HEK293 (cell line): ENCODE measurements at regions of chr2 and their contacts with region 1.

Region 1: DNA sequence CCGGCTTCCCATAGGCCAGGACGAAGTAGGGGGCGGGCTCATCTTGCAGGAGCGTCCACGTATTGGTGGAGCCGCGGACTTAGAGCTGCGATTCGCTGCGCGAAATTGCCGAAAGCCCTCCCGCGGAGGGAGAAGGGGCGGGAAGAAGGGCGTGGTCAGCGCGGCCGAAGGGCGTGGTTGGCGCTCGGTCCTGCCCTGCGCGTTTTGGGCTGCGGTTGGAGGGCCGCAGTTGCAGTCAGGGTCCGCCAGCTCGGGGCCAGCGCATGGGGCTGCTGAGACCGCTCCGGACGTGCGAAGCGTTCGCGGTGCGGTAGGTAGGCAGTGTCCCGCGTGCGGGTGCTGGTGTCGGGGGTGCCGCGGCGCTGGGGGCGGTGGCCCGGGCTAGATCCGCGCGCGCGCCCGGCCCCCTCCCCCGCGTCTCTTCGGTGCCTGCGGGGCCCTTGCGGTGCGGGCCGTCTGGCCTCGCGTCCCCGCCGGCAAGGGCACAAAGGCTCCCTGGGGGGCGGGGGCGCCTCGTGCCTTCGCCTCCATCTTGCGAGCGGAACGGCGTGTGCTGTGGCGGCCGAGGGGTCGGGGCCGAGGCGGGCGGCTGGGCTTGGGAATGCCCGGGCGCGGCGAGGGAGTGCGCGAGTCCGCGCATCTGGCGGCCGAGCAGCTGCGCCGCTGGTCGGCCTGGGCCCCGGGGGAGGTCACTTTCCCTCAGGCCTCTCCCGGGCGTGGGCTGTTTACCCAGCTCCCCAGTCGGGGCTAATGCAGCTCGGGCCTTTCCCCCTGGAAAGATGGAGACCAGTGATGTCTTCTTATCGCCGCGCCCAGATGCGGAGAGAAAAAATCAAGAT is at the start of gene CEP68:
- H3K4me3 ChIP-seq: peak within 1 kb of the TSS; percentile 67
- H3K27ac ChIP-seq: peak within 1 kb of the TSS; percentile 81; the same call in 1 of the 2 replicates
- H3K4me1 ChIP-seq: peaks cover 8% of the 10 kb centered on the region; the same call in 1 of the 2 replicates
- CTCF ChIP-seq: no peak

Region 2: DNA sequence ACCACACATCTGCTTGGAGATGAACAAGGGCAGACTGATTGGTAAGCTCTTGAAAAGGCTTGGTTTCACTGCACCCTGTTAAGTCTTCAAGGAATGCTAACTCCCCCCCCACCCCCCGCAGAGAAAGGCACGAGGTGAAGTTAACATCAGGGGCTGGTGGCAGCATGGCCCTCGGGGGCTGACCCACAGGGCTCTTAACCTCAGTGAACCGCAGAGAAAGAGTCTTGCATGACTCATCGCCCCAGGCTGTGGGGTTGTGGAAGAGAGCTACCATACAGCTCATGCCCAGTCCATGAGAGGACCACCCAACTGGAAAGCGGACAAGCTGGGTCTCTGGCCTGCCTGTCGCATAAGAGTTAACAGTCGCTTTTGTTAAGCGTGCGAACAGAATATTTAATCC is 10.8 kb before region 1 on chr2:
- CTCF ChIA-PET with region 1: interaction called, 4 read pairs
- POLR2A ChIA-PET with region 1: interaction called, 29 read pairs
- H3K4me3 ChIP-seq: no peak overlapping the region
- H3K27ac ChIP-seq: no peak overlapping the region
- H3K4me1 ChIP-seq: no peaks in the 10 kb centered on the region
- CTCF ChIP-seq: no peak

Region 3: GRCh38 chr2:65129826-65130663 is 73.6 kb after region 1 on chr2 and contains the start of gene RAB1A:
- CTCF ChIA-PET with region 1: interaction called, 4 read pairs
- POLR2A ChIA-PET with region 1: interaction called, 35 read pairs
- H3K4me3 ChIP-seq: peak within 1 kb of the TSS; percentile 92
- H3K27ac ChIP-seq: peak within 1 kb of the TSS; percentile 90
- H3K4me1 ChIP-seq: peaks cover 22% of the 10 kb centered on the region
- CTCF ChIP-seq: peak; percentile 82

Region 4: GRCh38 chr2:65227425-65228262 is 171.2 kb after region 1 on chr2 and contains the start of gene ACTR2:
- CTCF ChIA-PET with region 1: no interaction called
- POLR2A ChIA-PET with region 1: interaction called, 18 read pairs
- H3K4me3 ChIP-seq: peak within 1 kb of the TSS; percentile 95
- H3K27ac ChIP-seq: peak within 1 kb of the TSS; percentile 86
- H3K4me1 ChIP-seq: 0 out of 2 replicates have a peak, but pooled peaks cover 8% of the 10 kb centered on the region
- CTCF ChIP-seq: no peak; the same call in 1 of the 2 replicates